ENCODE measurements at regions of chr20 and their contacts with region 1.

Region 1: GRCh38 chr20:50713657-50714101 is 17.7 kb upstream of the PARD6B start:
- DNase-seq: no peak
- H3K4me3 ChIP-seq: no peak overlapping the region
- H3K27ac ChIP-seq: no peak overlapping the region
- H3K4me1 ChIP-seq: peaks cover 93% of the 10 kb centered on the region
- H3K27me3 ChIP-seq: no peaks in the 10 kb centered on the region
- CTCF ChIP-seq: no peak

Region 2: DNA sequence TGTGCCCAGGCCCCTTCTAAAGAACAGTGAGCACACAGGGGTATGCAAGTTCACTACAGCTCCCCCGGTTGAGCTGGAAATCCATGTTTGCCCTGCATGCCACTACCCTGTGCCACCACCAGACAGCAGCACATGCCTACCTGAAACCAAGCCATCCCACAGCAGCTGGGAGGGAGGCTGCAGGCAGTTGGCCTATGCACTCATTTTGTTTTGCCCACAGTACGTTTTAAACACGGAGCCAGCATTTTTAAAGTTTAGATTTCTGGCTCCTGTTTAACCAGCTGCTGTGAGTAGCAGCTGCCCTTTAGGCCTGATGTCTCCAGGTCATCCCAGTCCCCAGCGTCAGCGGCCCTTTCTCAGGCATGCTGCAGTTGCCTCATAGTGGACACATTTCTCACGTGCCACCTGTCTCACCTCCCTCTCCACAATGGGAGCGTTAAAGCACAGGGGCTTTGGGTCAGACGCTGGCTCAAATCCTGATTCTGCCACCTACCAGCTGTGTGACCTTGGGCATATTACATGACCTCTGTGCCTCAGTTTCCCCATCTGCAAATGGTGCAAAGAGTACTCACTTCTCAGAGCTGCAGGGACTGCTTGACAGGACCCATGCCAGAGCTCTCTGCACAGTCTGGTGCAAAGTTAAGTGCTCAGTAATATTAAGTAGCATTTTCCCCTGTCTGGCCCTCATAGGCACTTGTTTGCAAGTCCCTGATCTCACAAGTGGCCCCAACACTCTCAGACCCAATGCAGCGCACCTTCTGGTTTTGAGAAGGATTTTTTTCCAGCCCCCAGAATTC is 592.6 kb before region 1 on chr20:
- CTCF ChIA-PET with region 1: interaction called, 11 read pairs
- POLR2A ChIA-PET with region 1: no interaction called
- intact Hi-C with region 1: no loop called
- DNase-seq: peak; percentile 66 to 72
- H3K4me3 ChIP-seq: no peak overlapping the region
- H3K27ac ChIP-seq: no peak overlapping the region
- H3K4me1 ChIP-seq: peaks cover 11% of the 10 kb centered on the region
- H3K27me3 ChIP-seq: no peaks in the 10 kb centered on the region
- CTCF ChIP-seq: peak; percentile 90

Region 3: GRCh38 chr20:50224531-50225255 is 489.0 kb before region 1 on chr20:
- CTCF ChIA-PET with region 1: no interaction called
- POLR2A ChIA-PET with region 1: no interaction called
- intact Hi-C with region 1: no loop called
- DNase-seq: peak in 1 of 2 experiments; percentile 72
- H3K4me3 ChIP-seq: no peak overlapping the region
- H3K27ac ChIP-seq: peak overlapping the region; percentile 73
- H3K4me1 ChIP-seq: peaks cover 90% of the 10 kb centered on the region
- H3K27me3 ChIP-seq: no peaks in the 10 kb centered on the region
- CTCF ChIP-seq: peak; percentile 52

Region 4: DNA sequence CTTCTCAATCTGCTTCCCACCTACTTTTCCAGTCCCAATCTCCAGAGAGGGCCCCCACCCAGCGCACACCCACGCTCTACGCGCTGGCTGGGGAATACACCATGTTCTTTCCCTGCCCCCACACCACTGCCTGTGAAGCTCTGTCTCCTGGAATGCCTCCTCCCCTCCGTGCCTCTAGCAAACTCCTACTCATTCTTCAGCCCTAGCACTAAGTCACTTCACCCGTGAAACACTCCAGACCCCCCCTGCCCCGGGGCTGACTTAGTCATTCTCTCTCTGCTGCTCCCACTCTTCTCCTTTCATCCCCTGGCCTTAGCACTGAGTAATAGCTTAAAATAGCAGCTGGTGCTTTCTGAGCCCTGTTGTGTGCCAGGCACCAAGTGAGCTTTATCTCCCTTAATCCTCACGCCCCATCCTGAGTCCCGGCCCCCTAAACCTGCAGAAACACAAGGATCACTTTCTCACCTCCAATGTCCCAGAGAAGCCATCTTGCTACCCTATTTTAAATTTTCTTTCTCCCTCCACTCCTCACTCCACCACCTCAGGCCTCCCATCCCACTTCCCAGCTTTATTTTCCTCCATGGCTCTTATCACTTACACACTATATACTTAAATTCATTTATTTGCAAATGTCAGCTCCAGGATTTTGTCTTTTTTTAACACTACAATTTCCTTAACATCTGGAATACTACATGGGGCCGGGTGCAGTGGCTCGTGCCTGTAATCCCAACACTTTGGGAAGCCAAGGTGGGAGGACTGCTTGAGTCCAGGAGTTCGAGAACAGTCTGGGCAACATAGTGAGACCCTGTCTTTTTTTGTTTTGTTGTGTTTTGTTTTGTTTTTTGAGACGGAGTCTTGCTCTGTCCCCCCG is 11.4 kb after region 1 on chr20:
- CTCF ChIA-PET with region 1: interaction called, 6 read pairs
- POLR2A ChIA-PET with region 1: interaction called, 12 read pairs
- intact Hi-C with region 1: loop called (anchors 1 kb)
- DNase-seq: peak; percentile 88 to 98
- H3K4me3 ChIP-seq: peak overlapping the region; percentile 20; the same call in 1 of the 2 replicates
- H3K27ac ChIP-seq: peak overlapping the region; percentile 71
- H3K4me1 ChIP-seq: peaks cover 63% of the 10 kb centered on the region
- H3K27me3 ChIP-seq: no peaks in the 10 kb centered on the region
- CTCF ChIP-seq: no peak